A549 (cell line): ENCODE measurements at regions of chr19 and their contacts with region 1.

Region 1: GRCh38 chr19:33214596-33214995 is 11.1 kb downstream of the SLC7A10 start:
- DNase-seq: peak; percentile 66 to 72
- ATAC-seq: peak; percentile 48 to 76; a peak in 5 of 6 replicates
- H3K4me3 ChIP-seq: no peak overlapping the region
- H3K27ac ChIP-seq: no peak overlapping the region
- H3K4me1 ChIP-seq: no peaks in the 10 kb centered on the region
- CTCF ChIP-seq: peak; percentile 47
- EP300 ChIP-seq: no peak
- POLR2A ChIP-seq: no peak
- RAD21 ChIP-seq: peak; percentile 25 to 48; a peak in 3 of 5 replicates

Region 2: DNA sequence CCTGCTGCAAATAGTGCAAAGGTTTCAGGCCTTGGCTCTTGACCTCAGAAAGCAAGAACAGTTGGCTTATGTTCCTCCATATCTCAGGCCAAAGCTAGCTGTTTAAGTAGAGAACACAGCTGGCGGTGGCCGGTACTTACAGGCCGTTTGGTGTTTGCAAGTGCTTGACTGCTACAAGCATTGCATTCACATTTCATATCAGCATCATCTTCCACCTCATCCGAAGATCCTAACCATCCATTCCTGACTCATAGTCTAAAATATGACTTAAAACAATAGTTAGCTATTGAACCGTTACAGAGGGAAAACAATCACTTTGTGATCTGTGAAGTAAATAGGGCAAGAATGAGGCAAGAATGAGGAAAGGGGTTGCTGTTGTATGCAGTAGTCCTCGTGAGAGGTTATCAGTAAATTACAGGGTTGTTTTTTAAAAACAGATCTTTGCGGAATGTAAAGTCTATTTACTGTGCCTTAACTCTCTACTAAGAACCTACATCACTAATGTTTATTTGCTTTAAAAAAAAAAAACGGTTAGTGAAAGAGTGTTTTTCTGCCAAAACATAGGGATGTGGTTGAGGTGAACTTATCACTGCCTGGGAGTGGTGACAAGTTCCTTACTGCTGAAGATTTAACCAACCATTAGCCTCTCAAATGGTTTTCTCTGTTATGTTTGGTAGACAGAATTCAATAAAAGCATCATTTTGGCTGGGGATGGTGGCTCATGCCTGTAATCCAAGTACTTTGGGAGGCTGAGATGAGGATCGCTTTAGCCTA is 104.3 kb before region 1 on chr19:
- CTCF ChIA-PET with region 1: no interaction called
- POLR2A ChIA-PET with region 1: no interaction called
- DNase-seq: peak in 1 of 2 experiments; percentile 39
- ATAC-seq: peak in 1 of 2 experiments; percentile 23; a peak in 2 of 6 replicates
- H3K4me3 ChIP-seq: no peak overlapping the region
- H3K27ac ChIP-seq: no peak overlapping the region
- H3K4me1 ChIP-seq: no peaks in the 10 kb centered on the region
- CTCF ChIP-seq: no peak
- EP300 ChIP-seq: no peak
- POLR2A ChIP-seq: no peak
- RAD21 ChIP-seq: no peak

Region 3: DNA sequence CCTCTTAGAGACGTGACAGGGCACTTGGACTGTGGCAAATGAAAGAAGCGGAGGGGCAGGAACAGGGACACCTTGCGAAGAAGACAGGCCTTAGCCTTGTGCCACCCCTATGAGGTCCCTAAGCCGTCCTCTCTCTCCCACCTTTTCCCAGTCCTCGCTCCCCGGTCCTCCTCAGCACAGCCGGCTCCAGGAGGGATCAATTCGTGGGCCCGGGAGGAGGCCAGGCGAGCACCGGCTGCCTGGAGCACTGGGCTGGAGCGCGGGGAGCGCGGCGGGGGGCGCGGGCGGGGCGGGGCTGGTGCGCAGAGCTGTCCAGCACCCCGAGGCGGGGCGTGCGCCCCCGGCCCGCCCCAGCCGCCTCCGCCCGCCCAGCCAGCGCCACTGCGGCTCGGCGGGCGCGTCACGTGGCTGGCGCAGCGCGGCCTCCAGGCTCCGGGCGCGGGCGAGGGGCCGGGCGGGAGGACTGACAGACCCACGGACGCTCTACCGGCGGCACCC is 20.7 kb before region 1 on chr19 and contains the start of gene LRP3:
- CTCF ChIA-PET with region 1: interaction called, 14 read pairs
- POLR2A ChIA-PET with region 1: no interaction called
- DNase-seq: peak in 1 of 2 experiments; percentile 55
- ATAC-seq: peak; percentile 59 to 64
- H3K4me3 ChIP-seq: peak within 1 kb of the TSS; percentile 69
- H3K27ac ChIP-seq: peak within 1 kb of the TSS; percentile 71 to 91
- H3K4me1 ChIP-seq: peaks cover 10% of the 10 kb centered on the region; the same call in 2 of the 3 replicates
- CTCF ChIP-seq: no peak
- EP300 ChIP-seq: no peak
- POLR2A ChIP-seq: peak; percentile 36; the same call in 1 of the 2 replicates
- RAD21 ChIP-seq: no peak
- polyA plus RNA-seq, gene LRP3: 10.9 and 16.1 TPM in 2 replicates

Region 4: DNA sequence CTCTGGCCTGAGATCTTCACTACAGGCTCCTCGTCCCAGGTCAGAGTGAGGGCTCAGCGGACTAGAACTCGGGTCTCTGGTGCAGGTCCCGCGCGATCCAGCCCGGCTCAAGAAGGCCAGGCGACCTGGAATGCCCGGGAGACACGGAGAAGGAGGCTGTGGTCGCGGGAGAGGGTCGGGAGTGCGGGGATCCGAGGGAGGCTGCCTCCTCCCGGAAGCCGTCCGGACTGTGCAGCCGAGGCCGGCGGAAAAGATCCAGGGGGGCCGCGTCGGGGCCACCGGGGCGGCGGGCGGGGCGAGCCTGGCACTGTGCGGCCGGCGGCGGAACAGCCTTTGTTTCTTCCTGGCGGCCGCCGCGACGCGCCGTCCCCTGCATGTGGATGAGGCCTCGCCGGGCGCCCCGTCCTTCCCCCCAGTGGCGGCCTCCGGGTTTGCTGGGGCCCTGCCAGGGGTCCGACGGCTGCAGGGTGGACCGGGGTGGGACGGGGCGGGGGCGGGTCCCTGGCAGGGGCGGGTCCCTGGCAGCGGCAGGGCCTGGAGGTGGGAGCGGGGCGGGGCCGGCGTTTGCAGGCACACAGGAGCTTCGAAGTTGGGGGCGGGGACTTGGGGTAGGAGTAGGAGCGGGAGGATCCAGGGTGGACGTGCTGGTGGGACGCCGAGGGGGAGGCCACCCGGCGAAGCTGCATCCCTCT is 12.1 kb after region 1 on chr19:
- CTCF ChIA-PET with region 1: interaction called, 20 read pairs
- POLR2A ChIA-PET with region 1: interaction called, 8 read pairs
- DNase-seq: peak; percentile 63 to 67
- ATAC-seq: peak; percentile 32 to 69
- H3K4me3 ChIP-seq: peak overlapping the region; percentile 37
- H3K27ac ChIP-seq: peak overlapping the region; percentile 12 to 56; a peak in 3 of 6 replicates
- H3K4me1 ChIP-seq: peaks cover 16% of the 10 kb centered on the region
- CTCF ChIP-seq: no peak
- EP300 ChIP-seq: no peak
- POLR2A ChIP-seq: no peak
- RAD21 ChIP-seq: no peak